Sigmoid colon (tissue), 7 donors: ENCODE measurements at regions of chr5 and their contacts with region 1.

Region 1: DNA sequence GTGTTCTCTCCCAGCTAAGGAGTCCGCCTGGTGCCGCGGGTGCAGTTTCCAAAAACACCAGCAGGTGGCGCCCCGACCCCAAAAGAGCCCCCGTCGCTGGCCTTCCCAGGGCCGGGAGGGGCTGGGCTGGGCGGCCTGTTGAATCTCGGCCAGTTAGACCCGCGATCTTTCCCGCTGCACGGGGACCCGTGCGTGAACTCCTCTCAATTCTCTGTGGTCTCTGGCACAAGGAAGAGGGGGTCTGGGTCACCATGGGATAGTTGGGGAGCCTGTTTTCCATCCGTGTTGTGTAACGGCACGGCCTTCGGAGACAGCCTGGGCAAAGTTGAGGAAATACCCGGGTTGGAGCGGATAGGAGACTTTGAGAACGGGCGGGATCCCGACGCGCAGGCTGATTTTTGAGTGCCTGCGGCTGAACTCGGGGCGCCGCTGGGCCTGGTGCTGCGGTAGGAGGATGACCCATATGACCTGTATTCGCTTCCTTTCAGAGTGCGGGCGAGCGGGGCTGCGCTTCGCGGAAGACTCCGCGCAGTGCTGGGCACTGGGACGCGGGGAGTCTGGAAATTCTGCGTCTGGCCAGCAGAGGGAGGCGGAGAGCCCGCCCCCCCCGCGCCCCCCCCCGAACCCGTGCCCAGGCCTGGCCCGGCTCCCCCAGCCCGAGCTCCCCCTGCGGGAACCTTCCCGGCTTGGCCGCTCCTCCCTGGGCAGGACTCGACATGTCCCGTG is 7.9 kb upstream of the PSD2 start:
- DNase-seq: peak; percentile 92
- H3K4me3 ChIP-seq: peak overlapping the region; percentile 42 to 64 (median 56)
- H3K27ac ChIP-seq: peak overlapping the region; percentile 67 to 76 (median 70)
- H3K4me1 ChIP-seq: peaks cover 0 to 13% (median 10%) of the 10 kb centered on the region in 4 donors
- H3K27me3 ChIP-seq: no peaks in the 10 kb centered on the region
- CTCF ChIP-seq: peak; percentile 80 to 98 (median 90)
- EP300 ChIP-seq: no peak
- POLR2A ChIP-seq: no peak

Region 2: GRCh38 chr5:139844472-139845145 is 56.9 kb after region 1 on chr5:
- intact Hi-C with region 1: loop called (anchors 1 kb)
- DNase-seq: peak; percentile 86
- H3K4me3 ChIP-seq: no peak overlapping the region
- H3K27ac ChIP-seq: no peak overlapping the region
- H3K4me1 ChIP-seq: peaks cover 0 to 21% (median 11%) of the 10 kb centered on the region in 4 donors
- H3K27me3 ChIP-seq: peaks cover 0 to 9% (median 0%) of the 10 kb centered on the region in 3 donors
- CTCF ChIP-seq: peak; percentile 33 to 58 (median 46)
- EP300 ChIP-seq: no peak
- POLR2A ChIP-seq: no peak

Region 3: DNA sequence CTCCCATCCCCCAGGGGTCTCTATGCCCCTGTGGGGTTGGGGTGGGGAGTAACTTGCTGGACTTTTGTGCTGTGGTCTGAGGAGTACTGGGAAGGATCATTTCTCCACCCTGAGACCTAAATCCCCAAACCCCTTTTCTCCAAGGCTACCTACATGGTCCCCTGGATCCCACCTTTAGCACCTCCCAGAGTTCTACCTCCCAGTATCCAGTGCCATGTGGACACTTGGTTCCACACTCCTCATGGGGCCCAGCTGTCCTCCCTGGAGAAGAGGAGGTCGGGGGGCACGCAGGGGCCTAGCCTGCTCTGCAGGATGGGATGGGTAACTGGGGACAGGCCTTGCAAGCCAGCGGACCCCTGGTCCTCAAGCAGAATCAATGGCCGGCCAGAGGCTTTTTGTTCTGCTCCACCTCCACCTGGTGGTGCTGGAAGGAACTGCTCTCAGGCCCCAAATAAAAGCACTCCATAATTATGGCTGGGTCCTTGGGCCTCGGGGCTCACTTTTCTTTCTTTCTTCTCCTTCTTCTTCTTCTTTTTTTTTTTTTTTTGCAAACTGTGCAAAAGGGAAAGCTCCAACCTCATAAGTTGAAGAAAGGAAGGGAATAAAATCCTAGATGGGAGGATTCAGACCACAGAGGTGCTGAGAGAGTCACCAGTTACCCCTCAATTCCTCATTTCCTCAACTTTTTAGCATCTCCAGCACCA is 76.3 kb after region 1 on chr5:
- intact Hi-C with region 1: loop called (anchors 1 kb)
- DNase-seq: peak; percentile 83
- H3K4me3 ChIP-seq: no peak overlapping the region
- H3K27ac ChIP-seq: peak overlapping the region in 2 of 4 donors; percentile 53 to 54
- H3K4me1 ChIP-seq: peaks cover 0 to 17% (median 15%) of the 10 kb centered on the region in 4 donors
- H3K27me3 ChIP-seq: no peaks in the 10 kb centered on the region
- CTCF ChIP-seq: peak; percentile 57 to 86 (median 76)
- EP300 ChIP-seq: no peak
- POLR2A ChIP-seq: no peak

Region 4: DNA sequence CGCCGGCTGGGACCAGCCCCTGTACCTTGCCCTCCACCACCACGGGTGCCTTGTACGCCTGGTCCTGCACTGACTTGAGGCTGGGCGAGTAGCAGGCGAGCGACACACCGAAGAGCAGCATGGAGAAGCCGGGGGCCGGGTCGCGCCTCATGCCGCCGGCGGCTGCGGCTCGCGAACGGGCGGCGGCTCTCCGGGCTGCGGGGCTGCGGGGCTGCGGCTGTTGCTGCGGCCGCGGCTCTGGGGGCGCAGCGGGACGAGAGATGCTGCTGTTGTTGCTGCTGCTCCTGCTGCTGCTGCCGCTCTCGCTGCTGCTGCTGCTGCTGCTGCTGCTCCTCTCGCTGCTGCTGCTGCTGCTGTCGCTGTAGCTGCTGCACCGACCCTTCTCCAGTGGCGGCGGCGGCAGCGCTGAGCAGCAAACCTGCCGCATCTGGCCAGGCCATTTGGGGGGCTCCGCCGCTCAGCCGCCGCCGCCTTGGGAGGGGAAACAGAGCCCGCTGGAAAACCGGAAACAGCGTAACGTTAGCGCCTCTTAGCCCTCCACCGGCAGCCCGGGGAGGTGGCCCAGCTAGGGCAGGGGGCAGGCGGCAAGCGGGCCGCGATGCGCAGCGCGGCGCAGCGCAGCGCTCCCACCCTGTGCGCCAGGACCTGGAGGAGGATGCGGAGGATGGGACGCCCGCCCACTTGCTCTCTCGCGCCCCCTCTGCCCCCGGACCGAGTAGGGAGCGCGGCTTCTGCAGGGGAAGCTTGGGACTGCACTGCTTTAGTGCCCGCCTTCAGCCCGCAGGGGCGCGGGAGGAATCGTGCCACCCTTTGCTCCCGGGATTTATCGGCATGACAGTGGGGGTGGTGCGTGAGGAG is 255.1 kb after region 1 on chr5 and contains the start of gene NRG2:
- intact Hi-C with region 1: loop called (anchors 2 kb)
- DNase-seq: peak; percentile 90
- H3K4me3 ChIP-seq: peak within 1 kb of the TSS; percentile 61 to 75 (median 70)
- H3K27ac ChIP-seq: peak within 1 kb of the TSS; percentile 79 to 88 (median 82)
- H3K4me1 ChIP-seq: peaks cover 0 to 46% (median 25%) of the 10 kb centered on the region in 4 donors
- H3K27me3 ChIP-seq: no peaks in the 10 kb centered on the region
- CTCF ChIP-seq: peak; percentile 51 to 76 (median 69)
- EP300 ChIP-seq: no peak
- POLR2A ChIP-seq: no peak
- total RNA-seq, gene NRG2: 3.4 to 11.9 (median 5.6) TPM